ENCODE measurements at regions of chr12 and their contacts with region 1.

Region 1: DNA sequence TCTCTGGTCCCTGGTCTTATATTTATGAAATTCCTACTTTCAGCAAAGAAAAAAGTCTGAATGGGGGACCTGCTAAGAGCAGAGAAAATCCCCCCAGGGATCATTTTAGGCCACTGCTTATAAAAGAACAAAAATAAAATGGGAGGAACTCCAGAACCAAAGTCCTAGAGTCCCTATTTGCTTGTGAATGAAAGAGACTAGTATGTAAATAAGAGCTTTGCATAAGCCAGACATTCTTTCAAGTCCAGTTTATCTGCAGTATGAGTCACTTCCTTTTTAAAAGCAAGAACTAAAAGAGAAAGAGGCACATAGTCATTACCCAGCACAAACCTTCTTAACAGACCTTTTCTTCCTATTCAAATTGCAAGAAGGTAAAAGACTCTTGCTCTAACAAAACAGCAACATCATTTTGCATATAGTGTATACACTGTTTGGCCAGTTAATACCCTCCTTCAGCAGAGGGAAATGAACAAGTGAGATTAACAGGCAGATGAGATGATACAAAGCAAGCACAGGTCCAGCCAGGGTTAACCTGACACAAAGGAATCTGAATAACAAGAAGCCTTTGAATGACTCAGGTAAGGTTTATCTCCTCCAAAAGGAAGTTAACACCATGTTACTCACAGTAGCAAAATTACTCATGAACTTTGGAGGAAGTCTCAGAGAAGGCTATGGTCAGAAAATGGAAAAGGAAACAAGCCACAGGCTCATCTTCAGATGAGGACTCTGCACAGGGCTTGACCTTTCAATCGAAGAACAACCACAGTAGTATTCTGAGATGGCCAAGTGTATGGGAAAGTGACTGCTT is 87.3 kb downstream of the PHLDA1 start:
- DNase-seq: peak; percentile 54
- ATAC-seq: peak; percentile 92
- H3K4me3 ChIP-seq: no peak overlapping the region
- H3K27ac ChIP-seq: peak overlapping the region; percentile 37
- H3K4me1 ChIP-seq: peaks cover 18% of the 10 kb centered on the region
- H3K27me3 ChIP-seq: no peaks in the 10 kb centered on the region
- CTCF ChIP-seq: no peak
- EP300 ChIP-seq: 0 out of 4 replicates have a peak, but pooled peaks of 1 of the 2 experiments have one; percentile 24
- POLR2A ChIP-seq: no peak
- RAD21 ChIP-seq: no peak

Region 2: DNA sequence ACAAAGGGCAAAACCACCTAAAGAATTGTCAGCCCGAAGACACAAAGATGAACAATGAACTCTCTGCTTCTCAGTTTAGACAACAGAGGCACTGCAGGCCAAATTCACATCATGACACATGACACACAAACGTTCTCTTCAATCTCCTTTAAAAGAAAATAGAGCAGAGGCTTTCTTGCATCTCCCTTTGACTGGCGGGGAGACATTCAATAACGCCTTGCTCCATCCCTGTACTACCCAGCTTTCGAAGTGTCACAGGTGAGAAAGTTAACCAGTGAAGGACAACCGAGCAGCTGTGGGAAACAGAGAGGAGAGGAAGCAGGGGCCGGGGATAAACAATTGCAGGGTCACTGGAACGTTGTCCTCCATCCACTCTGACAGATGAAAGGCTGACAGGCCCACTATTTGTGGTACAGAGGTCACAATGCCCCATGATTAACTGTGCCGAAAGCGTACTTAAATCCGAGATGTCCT is 43.5 kb before region 1 on chr12:
- CTCF ChIA-PET with region 1: no interaction called
- POLR2A ChIA-PET with region 1: no interaction called
- RAD21 ChIA-PET with region 1: no interaction called
- SMC1A ChIA-PET with region 1: no interaction called
- in situ Hi-C with region 1: no loop called
- intact Hi-C with region 1: no loop called
- DNase-seq: no peak
- ATAC-seq: no peak
- H3K4me3 ChIP-seq: no peak overlapping the region
- H3K27ac ChIP-seq: no peak overlapping the region
- H3K4me1 ChIP-seq: no peaks in the 10 kb centered on the region
- H3K27me3 ChIP-seq: no peaks in the 10 kb centered on the region
- CTCF ChIP-seq: no peak
- EP300 ChIP-seq: no peak
- POLR2A ChIP-seq: no peak
- RAD21 ChIP-seq: no peak

Region 3: DNA sequence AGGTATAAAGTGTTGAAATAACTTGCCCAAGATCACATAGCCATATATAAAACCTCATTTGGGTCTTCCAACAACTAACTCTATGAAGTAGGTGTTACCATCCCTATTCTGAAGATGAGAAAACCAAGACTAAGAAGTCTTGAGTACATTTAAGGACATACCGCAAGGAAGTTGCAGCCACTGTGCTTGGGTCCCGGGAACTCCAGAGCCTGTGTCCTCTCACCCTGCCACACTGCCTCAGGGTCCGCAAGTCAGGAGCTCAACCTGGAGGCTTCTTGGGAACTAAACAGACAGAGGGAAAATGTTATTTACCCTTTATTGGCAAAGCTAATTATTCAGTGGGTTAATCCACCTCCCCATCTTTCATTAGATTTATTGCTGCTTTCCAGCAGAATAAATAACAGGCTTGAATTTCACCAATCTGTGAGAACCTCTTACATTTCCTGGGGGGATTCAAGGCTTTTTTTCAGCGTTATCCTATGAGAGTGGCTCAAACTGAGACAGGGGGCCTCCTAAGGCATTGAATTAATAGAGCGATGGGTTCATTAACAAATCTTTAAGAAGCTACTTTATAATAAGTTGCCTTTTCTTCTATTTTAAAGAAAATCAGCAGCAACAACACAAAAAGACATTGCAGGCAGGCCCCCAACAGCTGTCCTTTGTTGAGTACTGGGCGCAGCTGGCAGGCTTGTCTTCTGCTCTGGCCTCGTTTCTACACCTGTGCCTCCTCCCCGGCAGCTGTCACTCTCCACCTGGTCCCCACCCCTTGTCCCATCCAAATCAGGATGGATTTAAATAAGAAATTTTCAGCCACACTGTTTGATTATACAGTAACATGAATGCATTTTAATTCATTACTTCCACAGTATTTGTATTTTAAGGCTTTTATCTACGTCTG is 62.0 kb after region 1 on chr12:
- CTCF ChIA-PET with region 1: no interaction called
- POLR2A ChIA-PET with region 1: interaction called, 10 read pairs
- RAD21 ChIA-PET with region 1: no interaction called
- SMC1A ChIA-PET with region 1: no interaction called
- in situ Hi-C with region 1: no loop called
- intact Hi-C with region 1: no loop called
- DNase-seq: no peak
- ATAC-seq: no peak
- H3K4me3 ChIP-seq: no peak overlapping the region
- H3K27ac ChIP-seq: no peak overlapping the region
- H3K4me1 ChIP-seq: no peaks in the 10 kb centered on the region
- H3K27me3 ChIP-seq: no peaks in the 10 kb centered on the region
- CTCF ChIP-seq: no peak
- EP300 ChIP-seq: no peak
- POLR2A ChIP-seq: no peak
- RAD21 ChIP-seq: no peak

Measured in GM12878 (cell line).